CD8-positive, alpha-beta memory T cell (primary cell): ENCODE measurements at regions of chr19 and their contacts with region 1.

Region 1: GRCh38 chr19:21740559-21740958 is 26.8 kb downstream of the ZNF100 start:
- DNase-seq: no peak
- H3K4me3 ChIP-seq: no peak overlapping the region
- H3K4me3 Mint-ChIP-seq: no peak overlapping the region
- H3K27ac ChIP-seq: no peak overlapping the region
- H3K27ac Mint-ChIP-seq: no peak overlapping the region
- H3K4me1 ChIP-seq: no peaks in the 10 kb centered on the region
- H3K4me1 Mint-ChIP-seq: peaks cover 0 to 8% (median 2%) of the 10 kb centered on the region in 3 donors
- H3K27me3 ChIP-seq: no peaks in the 10 kb centered on the region
- H3K27me3 Mint-ChIP-seq: no peaks in the 10 kb centered on the region

Region 2: GRCh38 chr19:21709464-21709863 is 31.1 kb before region 1 on chr19:
- CTCF ChIA-PET with region 1: no interaction called
- POLR2A ChIA-PET with region 1: no interaction called
- DNase-seq: no peak
- H3K4me3 ChIP-seq: no peak overlapping the region
- H3K4me3 Mint-ChIP-seq: no peak overlapping the region
- H3K27ac ChIP-seq: no peak overlapping the region
- H3K27ac Mint-ChIP-seq: no peak overlapping the region
- H3K4me1 ChIP-seq: no peaks in the 10 kb centered on the region
- H3K4me1 Mint-ChIP-seq: no peaks in the 10 kb centered on the region
- H3K27me3 ChIP-seq: no peaks in the 10 kb centered on the region
- H3K27me3 Mint-ChIP-seq: peaks cover 2 to 7% of the 10 kb centered on the region in 2 donors

Region 3: DNA sequence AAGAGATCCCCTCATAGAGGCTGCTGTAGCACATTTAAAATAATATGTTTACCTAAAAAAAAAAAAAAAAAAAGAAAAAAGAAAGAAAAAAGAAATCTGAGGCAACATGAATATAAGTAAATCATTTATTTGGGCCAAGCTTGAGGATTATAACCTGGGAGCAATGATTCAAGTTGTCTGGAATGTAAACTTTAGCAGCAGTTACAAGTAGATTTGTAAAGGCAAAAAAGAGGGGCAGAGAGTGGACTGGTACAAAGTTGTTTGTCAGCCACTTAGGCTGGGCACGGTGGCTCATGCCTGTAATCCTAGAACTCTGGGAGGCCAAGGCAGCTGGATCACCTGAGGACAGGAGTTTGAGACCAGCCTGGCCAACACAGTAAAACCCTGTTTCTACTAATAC is 84.1 kb after region 1 on chr19:
- CTCF ChIA-PET with region 1: no interaction called
- POLR2A ChIA-PET with region 1: interaction called, 10 read pairs
- DNase-seq: no peak
- H3K4me3 ChIP-seq: no peak overlapping the region
- H3K4me3 Mint-ChIP-seq: no peak overlapping the region
- H3K27ac ChIP-seq: no peak overlapping the region
- H3K27ac Mint-ChIP-seq: peak overlapping the region in 1 of 8 donors; percentile 27
- H3K4me1 ChIP-seq: no peaks in the 10 kb centered on the region
- H3K4me1 Mint-ChIP-seq: peaks cover 7 to 21% (median 12%) of the 10 kb centered on the region in 3 donors
- H3K27me3 ChIP-seq: no peaks in the 10 kb centered on the region
- H3K27me3 Mint-ChIP-seq: no peaks in the 10 kb centered on the region